PC-3 (cell line): ENCODE measurements at regions of chr4 and their contacts with region 1.

Region 1: GRCh38 chr4:71607784-71608682 is 175.8 kb downstream of the GC start:
- DNase-seq: peak; percentile 99
- ATAC-seq: peak; percentile 89
- H3K4me3 ChIP-seq: peak overlapping the region; percentile 32; the same call in 1 of the 2 replicates
- H3K27ac ChIP-seq: peak overlapping the region; percentile 90
- H3K4me1 ChIP-seq: peaks cover 45% of the 10 kb centered on the region
- H3K27me3 ChIP-seq: no peaks in the 10 kb centered on the region
- CTCF ChIP-seq: no peak

Region 2: GRCh38 chr4:70632028-70632427 is 976.0 kb before region 1 on chr4:
- CTCF ChIA-PET with region 1: no interaction called
- POLR2A ChIA-PET with region 1: no interaction called
- intact Hi-C with region 1: no loop called
- DNase-seq: peak; percentile 95
- ATAC-seq: peak; percentile 58
- H3K4me3 ChIP-seq: no peak overlapping the region
- H3K27ac ChIP-seq: no peak overlapping the region
- H3K4me1 ChIP-seq: peaks cover 16% of the 10 kb centered on the region
- H3K27me3 ChIP-seq: no peaks in the 10 kb centered on the region
- CTCF ChIP-seq: no peak

Region 3: GRCh38 chr4:71184195-71184781 is 423.7 kb before region 1 on chr4:
- CTCF ChIA-PET with region 1: no interaction called
- POLR2A ChIA-PET with region 1: no interaction called
- intact Hi-C with region 1: loop called (anchors 2 kb)
- DNase-seq: peak; percentile 80
- ATAC-seq: peak; percentile 10; the same call in 1 of the 2 replicates
- H3K4me3 ChIP-seq: no peak overlapping the region
- H3K27ac ChIP-seq: no peak overlapping the region
- H3K4me1 ChIP-seq: peaks cover 21% of the 10 kb centered on the region
- H3K27me3 ChIP-seq: peaks cover 16% of the 10 kb centered on the region
- CTCF ChIP-seq: peak; percentile 95

Region 4: DNA sequence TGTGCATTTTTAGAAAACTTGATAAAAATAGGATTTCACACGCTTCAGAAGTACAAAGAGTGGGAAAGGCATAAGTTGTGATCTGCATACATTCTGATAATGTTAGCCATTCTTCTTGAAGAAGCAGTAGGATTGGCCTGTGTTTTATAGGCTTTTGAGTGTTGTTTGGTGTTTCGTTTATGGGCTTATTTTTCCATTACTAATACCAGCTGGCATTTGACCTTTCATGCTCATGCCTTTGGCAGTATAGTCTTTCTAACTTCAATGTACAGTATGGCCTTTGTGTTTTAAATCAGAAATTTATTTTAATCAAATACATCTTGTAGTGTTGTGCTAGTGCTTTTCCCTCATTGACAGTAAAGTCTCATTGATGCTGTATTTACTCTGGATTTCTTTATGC is 320.7 kb before region 1 on chr4:
- CTCF ChIA-PET with region 1: no interaction called
- POLR2A ChIA-PET with region 1: no interaction called
- intact Hi-C with region 1: loop called (anchors 5 kb)
- DNase-seq: peak; percentile 89
- ATAC-seq: peak; percentile 81
- H3K4me3 ChIP-seq: no peak overlapping the region
- H3K27ac ChIP-seq: peak overlapping the region; percentile 31
- H3K4me1 ChIP-seq: peaks cover 26% of the 10 kb centered on the region
- H3K27me3 ChIP-seq: no peaks in the 10 kb centered on the region
- CTCF ChIP-seq: no peak

Region 5: GRCh38 chr4:71498002-71498401 is 110.0 kb before region 1 on chr4:
- CTCF ChIA-PET with region 1: no interaction called
- POLR2A ChIA-PET with region 1: no interaction called
- intact Hi-C with region 1: loop called (anchors 2 kb)
- DNase-seq: peak; percentile 78
- ATAC-seq: peak; percentile 95
- H3K4me3 ChIP-seq: no peak overlapping the region
- H3K27ac ChIP-seq: peak overlapping the region; percentile 11
- H3K4me1 ChIP-seq: peaks cover 17% of the 10 kb centered on the region
- H3K27me3 ChIP-seq: no peaks in the 10 kb centered on the region
- CTCF ChIP-seq: no peak

Region 6: DNA sequence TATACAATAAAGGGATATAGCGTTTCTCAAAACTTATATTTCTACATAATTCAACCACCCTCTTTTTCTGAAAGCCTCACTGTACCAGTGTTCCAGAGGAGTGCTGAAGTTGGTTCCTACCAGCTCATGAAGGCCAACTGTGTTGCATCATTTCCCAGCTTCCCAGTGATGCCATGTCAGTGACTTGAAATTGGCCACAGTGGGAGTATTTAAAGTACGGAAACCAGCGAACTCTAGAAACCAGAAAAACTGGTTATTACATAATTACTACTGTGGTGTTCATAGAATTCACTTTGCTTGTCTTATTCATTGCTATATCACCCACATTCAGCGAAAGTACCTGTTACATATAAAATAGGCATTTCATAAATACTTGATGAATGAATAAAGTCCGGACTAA is 40.4 kb after region 1 on chr4:
- CTCF ChIA-PET with region 1: no interaction called
- POLR2A ChIA-PET with region 1: interaction called, 4 read pairs
- intact Hi-C with region 1: loop called (anchors 2 kb)
- DNase-seq: peak; percentile 97
- ATAC-seq: peak; percentile 70
- H3K4me3 ChIP-seq: no peak overlapping the region
- H3K27ac ChIP-seq: peak overlapping the region; percentile 50
- H3K4me1 ChIP-seq: peaks cover 22% of the 10 kb centered on the region
- H3K27me3 ChIP-seq: no peaks in the 10 kb centered on the region
- CTCF ChIP-seq: no peak